ENCODE measurements at regions of chr4 and their contacts with region 1.

Region 1: GRCh38 chr4:143498021-143498420 is 15.5 kb upstream of the SMARCA5 start:
- DNase-seq: no peak
- H3K4me3 ChIP-seq: no peak overlapping the region
- H3K27ac ChIP-seq: no peak overlapping the region
- H3K4me1 ChIP-seq: no peaks in the 10 kb centered on the region
- H3K27me3 ChIP-seq: no peaks in the 10 kb centered on the region

Region 2: DNA sequence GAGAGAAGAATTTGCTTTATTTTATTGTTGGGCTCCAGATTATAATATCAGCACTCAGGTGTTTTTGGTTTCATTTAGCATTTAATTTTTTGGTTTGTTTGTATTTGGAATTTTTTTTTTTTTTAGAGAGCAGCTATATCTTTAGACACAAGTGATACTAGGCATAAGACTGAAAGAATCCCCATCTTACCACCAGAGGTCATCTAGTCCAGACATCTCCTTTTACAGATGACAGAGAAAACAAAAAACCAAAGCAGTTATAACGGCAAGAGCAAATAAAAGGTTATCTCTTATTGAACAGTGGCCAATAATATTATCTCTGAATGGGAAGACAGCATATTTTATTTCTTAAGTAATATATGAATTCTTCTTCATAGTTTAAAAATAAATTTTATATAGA is 290.5 kb before region 1 on chr4:
- in situ Hi-C with region 1: loop called (anchors 10 kb)
- DNase-seq: peak; percentile 40
- H3K4me3 ChIP-seq: no peak overlapping the region
- H3K27ac ChIP-seq: no peak overlapping the region
- H3K4me1 ChIP-seq: no peaks in the 10 kb centered on the region
- H3K27me3 ChIP-seq: no peaks in the 10 kb centered on the region